Breast epithelium (tissue), 4 donors: ENCODE measurements at regions of chr15 and their contacts with region 1.

Region 1: DNA sequence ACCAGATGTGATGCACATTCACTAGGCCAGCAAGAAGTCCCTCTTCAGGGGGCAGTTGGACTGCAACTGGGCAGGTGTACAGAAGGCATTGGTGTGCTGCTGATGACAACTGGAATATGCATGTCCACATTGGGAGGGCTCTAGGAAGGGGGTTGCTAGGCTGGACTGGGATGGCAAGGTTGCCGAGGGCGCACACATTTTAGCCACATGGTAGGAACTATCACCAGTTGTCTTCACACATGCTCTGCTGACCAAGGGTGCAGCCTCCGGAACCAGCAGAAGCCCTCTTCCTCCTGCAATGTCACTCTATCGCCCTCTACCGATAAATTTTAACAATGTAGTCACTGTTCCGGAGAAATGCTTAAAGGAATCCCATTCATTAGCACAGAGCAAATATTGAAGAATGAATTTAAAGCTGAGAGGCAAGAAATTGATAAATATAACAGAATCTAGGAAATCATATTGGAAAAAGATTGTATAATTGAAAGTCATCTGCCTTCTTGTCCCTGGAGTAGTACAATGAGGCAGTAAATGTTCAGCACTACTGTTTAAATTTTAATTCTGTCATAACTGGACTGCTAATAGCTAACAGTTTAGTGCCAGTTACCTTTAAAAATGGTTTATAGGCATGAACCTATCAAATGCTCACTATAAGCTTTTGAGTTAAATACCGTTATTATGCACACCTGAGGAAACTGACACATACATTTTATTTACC is 22.6 kb upstream of the LYSMD4 start:
- DNase-seq: no peak
- H3K4me3 ChIP-seq: no peak overlapping the region
- H3K27ac ChIP-seq: no peak overlapping the region
- H3K4me1 ChIP-seq: no peaks in the 10 kb centered on the region
- H3K27me3 ChIP-seq: no peaks in the 10 kb centered on the region
- CTCF ChIP-seq: peak; percentile 44 to 84 (median 71)
- POLR2A ChIP-seq: no peak

Region 2: GRCh38 chr15:98794754-98795153 is 961.1 kb before region 1 on chr15:
- intact Hi-C with region 1: no loop called
- DNase-seq: no peak
- H3K4me3 ChIP-seq: no peak overlapping the region
- H3K27ac ChIP-seq: no peak overlapping the region
- H3K4me1 ChIP-seq: peaks cover 0 to 23% of the 10 kb centered on the region in 2 donors
- H3K27me3 ChIP-seq: no peaks in the 10 kb centered on the region
- CTCF ChIP-seq: no peak
- POLR2A ChIP-seq: no peak

Region 3: DNA sequence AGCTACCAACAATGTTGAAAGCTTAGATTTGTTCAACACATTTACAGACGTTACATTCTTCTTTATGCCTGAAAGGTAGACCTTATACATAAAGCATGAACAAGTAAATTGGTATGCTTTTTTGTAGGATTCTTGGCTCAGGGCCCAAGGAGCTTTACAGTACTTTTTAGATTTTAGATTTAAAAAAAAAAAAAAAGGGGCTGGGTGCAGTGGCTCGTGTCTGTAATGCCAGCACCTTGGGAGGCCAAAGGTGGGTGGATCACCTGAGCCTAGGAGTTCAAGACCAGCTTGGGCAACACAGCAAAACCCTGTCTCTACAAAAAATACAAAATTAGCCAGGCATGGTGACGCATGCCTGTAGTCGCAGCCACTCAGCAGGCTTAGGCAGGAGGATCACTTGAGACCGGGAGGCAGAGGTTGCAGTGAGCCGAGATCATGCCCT is 150.3 kb before region 1 on chr15:
- intact Hi-C with region 1: no loop called
- DNase-seq: no peak
- H3K4me3 ChIP-seq: no peak overlapping the region
- H3K27ac ChIP-seq: no peak overlapping the region
- H3K4me1 ChIP-seq: no peaks in the 10 kb centered on the region
- H3K27me3 ChIP-seq: no peaks in the 10 kb centered on the region
- CTCF ChIP-seq: no peak
- POLR2A ChIP-seq: no peak

Region 4: GRCh38 chr15:99741835-99742234 is 14.0 kb before region 1 on chr15:
- intact Hi-C with region 1: loop called (anchors 1 kb)
- DNase-seq: peak in 1 of 2 donors; percentile 2
- H3K4me3 ChIP-seq: no peak overlapping the region
- H3K27ac ChIP-seq: no peak overlapping the region
- H3K4me1 ChIP-seq: no peaks in the 10 kb centered on the region
- H3K27me3 ChIP-seq: no peaks in the 10 kb centered on the region
- CTCF ChIP-seq: no peak
- POLR2A ChIP-seq: no peak